ENCODE measurements at regions of chr10 and their contacts with region 1.

Region 1: GRCh38 chr10:118058371-118058770 is 11.6 kb upstream of the RAB11FIP2 start:
- DNase-seq: no peak
- H3K4me3 ChIP-seq: no peak overlapping the region
- H3K27ac ChIP-seq: no peak overlapping the region
- H3K4me1 ChIP-seq: no peaks in the 10 kb centered on the region
- H3K27me3 ChIP-seq: no peaks in the 10 kb centered on the region
- CTCF ChIP-seq: no peak
- EP300 ChIP-seq: no peak
- POLR2A ChIP-seq: no peak

Region 2: GRCh38 chr10:118035354-118036005 is 22.9 kb before region 1 on chr10:
- intact Hi-C with region 1: loop called in 1 of 4 experiments (anchors 1 kb)
- DNase-seq: no peak
- H3K4me3 ChIP-seq: no peak overlapping the region
- H3K27ac ChIP-seq: no peak overlapping the region
- H3K4me1 ChIP-seq: peaks cover 9% of the 10 kb centered on the region
- H3K27me3 ChIP-seq: no peaks in the 10 kb centered on the region
- CTCF ChIP-seq: no peak
- EP300 ChIP-seq: no peak
- POLR2A ChIP-seq: no peak

Region 3: DNA sequence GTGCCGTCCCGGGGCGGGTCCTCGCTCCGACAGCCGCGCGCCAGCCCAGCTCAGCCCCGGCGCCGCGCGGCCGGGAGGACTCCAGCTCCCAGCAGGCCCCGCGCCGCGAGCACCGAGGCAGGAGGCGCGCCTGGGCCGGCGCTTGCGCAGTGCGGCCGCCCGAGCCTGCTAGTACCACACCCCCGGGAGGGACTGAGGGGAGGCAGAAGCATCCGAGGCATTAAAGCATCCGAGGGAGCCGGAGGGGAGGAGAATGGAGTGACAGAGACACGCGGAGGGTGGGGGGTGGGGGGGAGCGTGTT is 1148.9 kb after region 1 on chr10 and contains the start of gene GRK5:
- intact Hi-C with region 1: no loop called
- DNase-seq: peak; percentile 95 to 96 (median 95)
- H3K4me3 ChIP-seq: peak within 1 kb of the TSS; percentile 96
- H3K27ac ChIP-seq: peak within 1 kb of the TSS; percentile 92 to 98
- H3K4me1 ChIP-seq: peaks cover 6% of the 10 kb centered on the region
- H3K27me3 ChIP-seq: no peaks in the 10 kb centered on the region
- CTCF ChIP-seq: no peak
- EP300 ChIP-seq: no peak
- POLR2A ChIP-seq: peak; percentile 50
- total RNA-seq, gene GRK5: 10.0 to 115 (median 36.9) TPM

Measured in ovary (tissue), 10 donors.